Activated naive CD4-positive, alpha-beta T cell treated with anti-CD3 and anti-CD28 coated beads for 36 hours (primary cell): ENCODE measurements at regions of chr1 and their contacts with region 1.

Region 1: GRCh38 chr1:65812065-65812464 is 19.4 kb downstream of the PDE4B start:
- DNase-seq: peak; percentile 78
- H3K4me3 Mint-ChIP-seq: no peak overlapping the region
- H3K27ac Mint-ChIP-seq: peak overlapping the region; percentile 36
- H3K4me1 Mint-ChIP-seq: peaks cover 12% of the 10 kb centered on the region
- H3K27me3 Mint-ChIP-seq: peaks cover 31% of the 10 kb centered on the region

Region 2: DNA sequence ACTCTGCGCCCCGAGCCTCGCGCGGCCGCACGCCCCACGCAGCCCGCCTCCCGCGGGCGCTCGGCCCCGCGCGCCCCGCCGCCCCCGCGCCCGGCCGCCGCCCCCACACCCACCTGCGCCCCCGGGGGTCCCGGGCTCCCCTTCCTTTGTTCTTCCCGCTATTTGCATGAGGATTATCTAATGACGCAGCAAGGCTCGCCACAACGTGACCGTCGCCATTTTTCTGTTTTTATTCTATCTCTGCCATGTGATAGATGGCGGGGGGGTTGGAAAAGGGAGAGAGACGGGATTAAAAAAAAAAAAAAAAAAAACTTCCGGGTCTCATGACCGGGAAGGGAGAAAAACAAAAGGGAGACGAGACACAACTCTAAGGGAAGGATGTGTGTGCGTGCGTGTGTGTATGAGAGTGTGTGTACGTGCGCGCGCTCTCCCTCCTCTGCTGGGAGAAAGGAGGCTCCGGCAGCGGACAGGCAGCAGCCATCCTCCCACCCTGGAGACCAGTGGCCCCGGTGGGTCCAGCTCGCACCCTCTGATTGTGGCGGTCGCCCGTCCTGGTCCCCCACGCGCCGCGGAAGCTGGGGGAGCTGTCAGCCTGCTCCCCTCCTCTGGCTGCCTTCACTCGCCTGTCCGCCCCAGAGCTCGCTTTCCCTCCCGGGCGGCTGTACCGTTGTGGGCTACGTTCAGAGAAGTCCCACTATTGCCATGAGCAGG is 744.4 kb before region 1 on chr1:
- CTCF ChIA-PET with region 1: no interaction called
- intact Hi-C with region 1: loop called (anchors 5 kb)
- DNase-seq: peak; percentile 71
- H3K4me3 Mint-ChIP-seq: peak overlapping the region; percentile 87
- H3K27ac Mint-ChIP-seq: peak overlapping the region; percentile 95
- H3K4me1 Mint-ChIP-seq: peaks cover 51% of the 10 kb centered on the region
- H3K27me3 Mint-ChIP-seq: no peaks in the 10 kb centered on the region

Region 3: DNA sequence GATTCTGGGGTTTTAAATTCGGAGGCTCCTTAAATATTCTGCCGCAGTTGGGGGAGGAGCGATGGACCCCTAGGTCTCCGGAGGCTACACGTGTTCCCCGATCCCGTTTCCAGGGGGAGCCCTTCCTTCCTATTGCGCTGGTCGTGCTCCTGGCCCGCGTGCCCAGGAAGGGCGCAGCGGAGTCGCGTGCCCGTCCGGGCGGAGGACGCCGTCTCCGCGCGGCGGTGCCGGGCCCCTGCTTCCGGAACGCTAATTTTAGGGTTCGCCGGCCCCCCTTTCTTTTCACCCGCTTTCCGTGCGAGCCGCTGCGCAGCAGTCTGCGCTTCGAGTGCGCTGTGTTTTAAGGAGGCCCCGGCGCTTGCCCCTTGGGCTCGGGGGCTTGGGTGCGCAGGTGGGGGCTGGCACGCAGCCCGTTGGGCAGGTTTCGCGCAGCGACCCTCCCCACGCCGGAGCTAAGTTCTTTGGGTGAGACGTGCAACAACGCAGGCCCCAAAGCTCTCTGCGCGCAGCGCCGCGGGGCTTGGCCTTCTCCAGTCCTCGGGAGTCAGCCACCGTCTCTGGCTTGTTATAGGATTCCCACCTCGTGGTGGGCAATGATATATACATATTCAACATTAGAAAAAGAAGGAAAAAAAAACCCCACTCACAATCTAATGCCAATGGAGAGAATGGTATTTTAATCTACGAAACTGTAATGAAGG is 546.3 kb before region 1 on chr1:
- CTCF ChIA-PET with region 1: no interaction called
- intact Hi-C with region 1: loop called (anchors 5 kb)
- DNase-seq: peak; percentile 35
- H3K4me3 Mint-ChIP-seq: peak overlapping the region; percentile 35
- H3K27ac Mint-ChIP-seq: no peak overlapping the region
- H3K4me1 Mint-ChIP-seq: peaks cover 27% of the 10 kb centered on the region
- H3K27me3 Mint-ChIP-seq: peaks cover 16% of the 10 kb centered on the region

Region 4: DNA sequence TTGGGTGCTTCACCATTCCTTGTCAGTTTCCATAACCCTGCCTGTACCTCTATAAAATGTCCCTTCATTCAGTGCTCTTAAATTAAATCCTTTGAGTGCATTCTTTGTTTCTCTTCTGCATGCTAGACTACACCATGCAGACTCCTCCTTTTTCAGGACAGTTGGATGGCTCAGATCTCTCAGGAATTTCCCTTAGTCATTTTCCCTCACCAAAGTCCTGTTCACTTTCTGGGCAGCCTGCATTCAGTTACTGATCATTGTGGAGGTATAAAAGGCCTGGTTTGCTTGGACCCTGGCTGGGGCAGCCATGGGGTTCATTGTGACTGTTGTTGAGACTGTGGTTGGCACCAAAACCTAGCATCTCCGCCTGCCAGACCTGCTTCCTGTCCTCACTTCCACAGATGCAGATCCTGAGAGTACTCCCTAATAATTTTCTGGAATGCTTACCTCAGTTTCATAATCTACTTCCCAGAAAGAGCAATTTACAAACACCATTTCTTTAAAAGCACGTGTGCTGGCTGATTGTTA is 69.1 kb after region 1 on chr1:
- CTCF ChIA-PET with region 1: no interaction called
- intact Hi-C with region 1: no loop called
- DNase-seq: no peak
- H3K4me3 Mint-ChIP-seq: no peak overlapping the region
- H3K27ac Mint-ChIP-seq: no peak overlapping the region
- H3K4me1 Mint-ChIP-seq: no peaks in the 10 kb centered on the region
- H3K27me3 Mint-ChIP-seq: no peaks in the 10 kb centered on the region

Region 5: DNA sequence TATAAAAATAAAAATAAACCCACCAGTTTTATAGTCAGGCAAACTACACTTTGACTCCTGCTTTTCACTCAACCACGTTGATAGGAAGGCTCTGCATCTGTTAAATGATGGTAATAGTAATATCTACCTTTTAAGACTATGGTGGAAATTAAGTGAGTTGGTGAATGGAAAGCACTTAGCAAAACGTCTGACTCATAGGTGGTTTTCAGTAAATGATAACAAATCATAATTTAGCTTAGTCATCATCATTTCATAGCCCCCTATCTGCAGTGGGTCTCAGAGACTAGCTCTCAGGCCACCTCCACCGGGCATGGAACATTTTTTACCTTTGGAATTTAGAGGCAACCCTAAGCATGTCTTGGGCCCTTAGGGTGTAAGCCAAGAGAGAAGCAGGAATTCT is 140.6 kb after region 1 on chr1:
- CTCF ChIA-PET with region 1: no interaction called
- intact Hi-C with region 1: loop called (anchors 2 kb)
- DNase-seq: no peak
- H3K4me3 Mint-ChIP-seq: no peak overlapping the region
- H3K27ac Mint-ChIP-seq: no peak overlapping the region
- H3K4me1 Mint-ChIP-seq: peaks cover 12% of the 10 kb centered on the region
- H3K27me3 Mint-ChIP-seq: no peaks in the 10 kb centered on the region

Region 6: GRCh38 chr1:66294692-66295384 is 482.8 kb after region 1 on chr1:
- CTCF ChIA-PET with region 1: no interaction called
- intact Hi-C with region 1: loop called (anchors 1 kb)
- DNase-seq: peak; percentile 44
- H3K4me3 Mint-ChIP-seq: no peak overlapping the region
- H3K27ac Mint-ChIP-seq: peak overlapping the region; percentile 46
- H3K4me1 Mint-ChIP-seq: peaks cover 43% of the 10 kb centered on the region
- H3K27me3 Mint-ChIP-seq: no peaks in the 10 kb centered on the region

Region 7: GRCh38 chr1:66402194-66402593 is 590.1 kb after region 1 on chr1:
- CTCF ChIA-PET with region 1: no interaction called
- intact Hi-C with region 1: loop called (anchors 1 kb)
- DNase-seq: no peak
- H3K4me3 Mint-ChIP-seq: no peak overlapping the region
- H3K27ac Mint-ChIP-seq: no peak overlapping the region
- H3K4me1 Mint-ChIP-seq: peaks cover 32% of the 10 kb centered on the region
- H3K27me3 Mint-ChIP-seq: no peaks in the 10 kb centered on the region

Region 8: GRCh38 chr1:66788231-66788939 is 976.3 kb after region 1 on chr1:
- CTCF ChIA-PET with region 1: no interaction called
- intact Hi-C with region 1: loop called (anchors 1 kb)
- DNase-seq: peak; percentile 81
- H3K4me3 Mint-ChIP-seq: peak overlapping the region; percentile 51
- H3K27ac Mint-ChIP-seq: peak overlapping the region; percentile 50
- H3K4me1 Mint-ChIP-seq: peaks cover 30% of the 10 kb centered on the region
- H3K27me3 Mint-ChIP-seq: no peaks in the 10 kb centered on the region